Activated CD8-positive, alpha-beta T cell treated with anti-CD3 and anti-CD28 coated beads for 36 hours (primary cell): ENCODE measurements at regions of chr10 and their contacts with region 1.

Region 1: GRCh38 chr10:122342293-122343134 is 32.0 kb upstream of the PLEKHA1 start:
- DNase-seq: peak; percentile 74
- ATAC-seq: peak; percentile 79
- H3K4me3 Mint-ChIP-seq: no peak overlapping the region
- H3K27ac Mint-ChIP-seq: no peak overlapping the region
- H3K4me1 Mint-ChIP-seq: peaks cover 11% of the 10 kb centered on the region
- H3K27me3 Mint-ChIP-seq: peaks cover 1% of the 10 kb centered on the region
- CTCF ChIP-seq: peak; percentile 84

Region 2: DNA sequence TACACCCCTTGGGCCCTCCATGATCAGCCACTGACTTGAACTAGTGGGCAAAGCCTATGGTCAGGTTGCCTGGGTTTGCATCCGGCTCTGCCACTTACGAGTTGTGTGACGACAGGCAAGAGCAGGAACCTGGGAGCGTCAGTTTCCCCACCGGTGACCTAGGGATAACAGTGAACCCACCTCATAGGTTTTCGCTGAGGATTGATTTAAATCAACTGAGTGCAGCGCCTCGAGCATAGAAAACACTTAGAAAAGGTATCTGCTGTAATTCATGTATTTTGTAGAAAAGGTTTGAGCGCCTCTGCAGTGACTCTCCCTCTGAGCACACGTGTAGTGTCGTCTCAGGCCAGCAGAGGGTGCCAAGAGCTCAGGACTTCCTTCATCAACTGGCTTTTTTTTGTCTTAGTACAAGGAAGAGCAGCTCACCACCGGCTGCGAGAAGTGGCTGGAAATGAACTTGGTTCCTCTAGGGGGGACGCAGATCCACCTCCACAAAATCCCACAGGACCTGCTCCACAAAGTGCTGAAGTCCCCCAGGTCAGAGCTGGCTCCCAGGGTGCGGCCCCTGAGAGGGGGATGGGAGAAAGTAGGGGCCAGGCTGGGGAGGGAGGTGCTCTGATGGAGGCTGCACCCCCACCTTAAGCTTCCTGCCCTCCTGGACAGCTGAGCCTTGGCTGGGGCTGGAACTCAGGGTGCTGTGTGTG is 43.8 kb before region 1 on chr10:
- CTCF ChIA-PET with region 1: interaction called, 19 read pairs
- POLR2A ChIA-PET with region 1: no interaction called
- intact Hi-C with region 1: no loop called
- DNase-seq: peak; percentile 81
- ATAC-seq: peak; percentile 96
- H3K4me3 Mint-ChIP-seq: no peak overlapping the region
- H3K27ac Mint-ChIP-seq: no peak overlapping the region
- H3K4me1 Mint-ChIP-seq: peaks cover 6% of the 10 kb centered on the region
- H3K27me3 Mint-ChIP-seq: peaks cover 2% of the 10 kb centered on the region
- CTCF ChIP-seq: peak; percentile 94

Region 3: GRCh38 chr10:122357685-122358084 is 15.2 kb after region 1 on chr10:
- CTCF ChIA-PET with region 1: interaction called, 10 read pairs
- POLR2A ChIA-PET with region 1: interaction called, 3 read pairs
- intact Hi-C with region 1: no loop called
- DNase-seq: no peak
- ATAC-seq: no peak
- H3K4me3 Mint-ChIP-seq: no peak overlapping the region
- H3K27ac Mint-ChIP-seq: no peak overlapping the region
- H3K4me1 Mint-ChIP-seq: peaks cover under 1% of the 10 kb centered on the region
- H3K27me3 Mint-ChIP-seq: peaks cover 3% of the 10 kb centered on the region
- CTCF ChIP-seq: no peak

Region 4: GRCh38 chr10:122368502-122369256 is 26.2 kb after region 1 on chr10:
- CTCF ChIA-PET with region 1: interaction called, 10 read pairs
- POLR2A ChIA-PET with region 1: no interaction called
- intact Hi-C with region 1: no loop called
- DNase-seq: no peak
- ATAC-seq: no peak
- H3K4me3 Mint-ChIP-seq: no peak overlapping the region
- H3K27ac Mint-ChIP-seq: no peak overlapping the region
- H3K4me1 Mint-ChIP-seq: peaks cover 4% of the 10 kb centered on the region
- H3K27me3 Mint-ChIP-seq: peaks cover 13% of the 10 kb centered on the region
- CTCF ChIP-seq: no peak

Region 5: DNA sequence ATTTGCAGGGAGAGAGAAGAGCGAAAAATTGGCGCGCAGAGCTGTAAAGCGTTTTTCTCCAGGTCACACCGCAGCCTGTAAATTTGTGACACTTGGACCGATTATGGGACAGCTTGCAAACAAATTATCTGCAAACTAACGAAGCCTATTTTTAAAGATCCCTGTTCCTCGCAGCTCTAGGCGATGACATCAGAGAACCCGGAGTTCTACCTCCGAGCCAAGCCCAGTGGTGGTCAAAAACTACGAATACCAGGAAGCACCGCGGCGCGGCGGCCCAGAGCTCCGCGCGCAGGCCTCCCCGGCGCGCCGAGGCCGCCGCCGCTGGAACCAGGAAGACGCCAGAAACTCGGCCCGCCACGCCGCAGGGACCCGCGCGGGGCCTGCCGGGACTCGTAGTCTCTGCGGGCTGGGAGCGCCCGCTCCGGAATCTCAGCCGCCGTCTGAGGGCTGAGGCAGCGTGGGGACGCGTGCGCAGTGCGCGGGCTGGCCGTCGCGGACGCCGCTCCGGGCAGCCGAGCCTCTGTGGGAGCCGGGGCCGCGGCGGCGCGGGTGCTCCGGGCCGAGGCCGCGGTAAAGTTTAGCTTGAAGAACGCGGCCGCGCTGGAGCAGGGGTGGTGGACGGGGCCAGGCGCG is 31.8 kb after region 1 on chr10 and contains the start of gene PLEKHA1:
- CTCF ChIA-PET with region 1: interaction called, 14 read pairs
- POLR2A ChIA-PET with region 1: no interaction called
- intact Hi-C with region 1: no loop called
- DNase-seq: peak; percentile 93
- ATAC-seq: peak; percentile 86
- H3K4me3 Mint-ChIP-seq: peak within 1 kb of the TSS; percentile 94
- H3K27ac Mint-ChIP-seq: peak within 1 kb of the TSS; percentile 98
- H3K4me1 Mint-ChIP-seq: peaks cover 41% of the 10 kb centered on the region
- H3K27me3 Mint-ChIP-seq: peaks cover 11% of the 10 kb centered on the region
- CTCF ChIP-seq: no peak
- total RNA-seq, gene PLEKHA1: 17.0 to 17.4 TPM

Region 6: DNA sequence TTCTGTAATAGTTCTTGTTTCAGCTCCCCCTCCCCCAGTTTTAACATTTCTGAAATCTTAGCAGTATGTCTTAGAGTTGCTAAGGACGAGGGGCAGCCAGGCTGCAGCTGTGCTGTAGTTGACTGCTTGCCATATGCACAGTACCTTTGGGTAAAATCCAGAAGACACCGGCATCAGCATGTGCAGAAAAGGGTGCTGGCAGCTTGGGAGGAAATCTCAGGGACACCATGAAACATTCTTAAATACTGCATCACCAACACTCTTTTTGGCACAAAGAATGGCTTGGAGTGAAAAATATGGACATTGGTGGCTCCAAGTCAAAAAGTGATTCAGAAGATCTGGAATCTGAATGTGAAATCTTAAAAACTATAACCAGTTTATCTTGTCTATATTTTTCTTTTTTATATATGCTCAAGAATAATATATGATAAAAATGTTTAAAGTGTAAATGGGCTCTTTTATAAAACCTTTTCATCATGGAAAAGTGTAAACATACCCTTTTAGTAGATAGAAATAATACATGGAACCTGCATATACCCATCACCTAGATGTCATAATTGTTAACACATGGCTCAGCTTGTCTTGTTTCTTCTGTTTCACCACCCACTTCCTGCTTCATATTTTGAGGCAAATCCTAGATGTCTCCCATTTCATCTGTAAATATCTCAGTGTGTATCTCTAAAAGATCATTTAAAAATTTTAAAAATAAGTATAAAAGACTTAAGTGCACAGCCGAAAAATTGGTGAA is 77.5 kb after region 1 on chr10:
- CTCF ChIA-PET with region 1: interaction called, 22 read pairs
- POLR2A ChIA-PET with region 1: no interaction called
- intact Hi-C with region 1: no loop called
- DNase-seq: no peak
- ATAC-seq: no peak
- H3K4me3 Mint-ChIP-seq: no peak overlapping the region
- H3K27ac Mint-ChIP-seq: no peak overlapping the region
- H3K4me1 Mint-ChIP-seq: peaks cover 78% of the 10 kb centered on the region
- H3K27me3 Mint-ChIP-seq: no peaks in the 10 kb centered on the region
- CTCF ChIP-seq: no peak